AG04450 (cell line): ENCODE measurements at regions of chr4 and their contacts with region 1.

Region 1: DNA sequence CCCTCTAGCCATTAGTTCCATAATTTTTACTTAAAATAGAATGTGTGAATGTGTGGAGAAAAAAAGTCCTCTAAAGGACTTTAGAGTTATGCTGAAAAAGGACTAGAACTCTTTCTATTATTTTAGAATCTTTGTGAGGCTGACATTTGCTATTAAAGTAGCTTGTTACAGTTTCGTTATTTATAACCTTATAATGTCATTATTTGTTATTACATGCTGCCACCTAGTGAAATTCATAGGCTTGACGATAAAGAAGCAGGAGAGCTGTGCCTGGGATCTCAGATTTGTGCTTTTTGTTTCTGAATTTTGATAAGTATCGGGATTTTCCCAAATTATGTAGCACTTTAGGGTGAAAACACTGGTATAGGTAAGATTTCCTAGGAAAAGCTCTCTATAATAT is 38.5 kb upstream of the TAPT1 start:
- DNase-seq: no peak
- H3K4me3 ChIP-seq: no peak overlapping the region
- H3K27ac ChIP-seq: no peak overlapping the region
- H3K27me3 ChIP-seq: peaks cover 12% of the 10 kb centered on the region
- CTCF ChIP-seq: peak; percentile 68

Region 2: GRCh38 chr4:15805583-15806517 is 458.9 kb before region 1 on chr4:
- CTCF ChIA-PET with region 1: interaction called, 26 read pairs
- POLR2A ChIA-PET with region 1: no interaction called
- DNase-seq: peak; percentile 21
- H3K4me3 ChIP-seq: no peak overlapping the region
- H3K27ac ChIP-seq: no peak overlapping the region
- H3K27me3 ChIP-seq: peaks cover 12% of the 10 kb centered on the region
- CTCF ChIP-seq: peak; percentile 79

Region 3: DNA sequence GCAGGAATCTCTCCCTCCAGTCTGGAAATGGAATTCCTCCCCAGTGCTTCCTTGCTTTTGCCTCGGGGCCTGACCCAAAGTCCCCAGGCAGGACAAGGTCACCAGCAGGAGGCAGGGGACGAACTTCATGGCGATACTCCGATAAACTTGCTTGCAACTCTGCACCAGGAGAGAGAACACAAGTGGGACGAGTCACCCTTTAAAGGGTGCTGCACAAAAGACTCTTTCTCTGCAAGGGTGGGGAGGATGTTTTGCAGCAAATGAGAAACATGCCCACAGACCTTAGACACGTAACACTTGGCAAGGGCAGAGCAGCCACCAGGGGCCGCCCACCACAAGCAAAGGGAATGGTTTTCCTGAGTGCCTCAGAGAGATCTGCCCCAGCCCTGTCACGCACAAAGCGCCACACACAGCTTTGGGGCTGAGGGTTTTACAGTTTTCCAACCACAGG is 301.8 kb before region 1 on chr4 and contains the start of gene FGFBP2:
- CTCF ChIA-PET with region 1: interaction called, 18 read pairs
- POLR2A ChIA-PET with region 1: no interaction called
- DNase-seq: no peak
- H3K4me3 ChIP-seq: no peak within 1 kb of the TSS
- H3K27ac ChIP-seq: no peak within 1 kb of the TSS
- H3K27me3 ChIP-seq: peaks cover 15% of the 10 kb centered on the region
- CTCF ChIP-seq: peak; percentile 57
- polyA plus RNA-seq, gene FGFBP2: not detected in 2 replicates

Region 4: DNA sequence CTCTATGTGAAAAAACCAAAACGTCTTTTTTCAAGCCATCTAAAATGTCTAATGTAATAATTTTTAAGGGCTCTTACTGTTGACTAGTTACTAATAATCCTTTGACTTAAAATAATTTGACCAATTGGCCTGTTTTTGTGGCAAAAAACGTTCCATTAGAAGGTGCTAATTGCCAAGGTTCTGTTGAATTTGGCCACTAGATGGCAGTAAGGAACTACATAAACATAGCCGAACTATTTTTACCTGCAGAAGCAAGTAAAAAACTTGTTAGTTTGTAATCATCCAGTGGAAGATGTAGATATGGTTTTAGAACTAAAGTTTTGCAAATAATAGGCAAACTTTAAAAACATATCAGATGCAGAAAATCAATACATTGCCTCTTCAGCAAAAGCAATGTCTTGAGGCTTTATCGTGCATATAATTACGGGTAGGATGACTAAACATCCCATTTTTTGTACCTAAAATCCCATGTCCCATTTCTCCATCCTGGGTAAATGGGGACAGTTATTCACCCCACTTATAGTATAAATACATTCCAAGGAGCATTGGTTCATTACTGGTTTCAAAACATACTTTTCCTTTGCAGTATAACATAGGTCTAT is 238.5 kb before region 1 on chr4:
- CTCF ChIA-PET with region 1: interaction called, 98 read pairs
- POLR2A ChIA-PET with region 1: no interaction called
- DNase-seq: peak; percentile 21
- H3K4me3 ChIP-seq: no peak overlapping the region
- H3K27ac ChIP-seq: no peak overlapping the region
- H3K27me3 ChIP-seq: peaks cover 19% of the 10 kb centered on the region
- CTCF ChIP-seq: peak; percentile 82

Region 5: GRCh38 chr4:16116493-16116990 is 148.3 kb before region 1 on chr4:
- CTCF ChIA-PET with region 1: no interaction called
- POLR2A ChIA-PET with region 1: no interaction called
- DNase-seq: no peak
- H3K4me3 ChIP-seq: no peak overlapping the region
- H3K27ac ChIP-seq: no peak overlapping the region
- H3K27me3 ChIP-seq: peaks cover 10% of the 10 kb centered on the region
- CTCF ChIP-seq: no peak

Region 6: DNA sequence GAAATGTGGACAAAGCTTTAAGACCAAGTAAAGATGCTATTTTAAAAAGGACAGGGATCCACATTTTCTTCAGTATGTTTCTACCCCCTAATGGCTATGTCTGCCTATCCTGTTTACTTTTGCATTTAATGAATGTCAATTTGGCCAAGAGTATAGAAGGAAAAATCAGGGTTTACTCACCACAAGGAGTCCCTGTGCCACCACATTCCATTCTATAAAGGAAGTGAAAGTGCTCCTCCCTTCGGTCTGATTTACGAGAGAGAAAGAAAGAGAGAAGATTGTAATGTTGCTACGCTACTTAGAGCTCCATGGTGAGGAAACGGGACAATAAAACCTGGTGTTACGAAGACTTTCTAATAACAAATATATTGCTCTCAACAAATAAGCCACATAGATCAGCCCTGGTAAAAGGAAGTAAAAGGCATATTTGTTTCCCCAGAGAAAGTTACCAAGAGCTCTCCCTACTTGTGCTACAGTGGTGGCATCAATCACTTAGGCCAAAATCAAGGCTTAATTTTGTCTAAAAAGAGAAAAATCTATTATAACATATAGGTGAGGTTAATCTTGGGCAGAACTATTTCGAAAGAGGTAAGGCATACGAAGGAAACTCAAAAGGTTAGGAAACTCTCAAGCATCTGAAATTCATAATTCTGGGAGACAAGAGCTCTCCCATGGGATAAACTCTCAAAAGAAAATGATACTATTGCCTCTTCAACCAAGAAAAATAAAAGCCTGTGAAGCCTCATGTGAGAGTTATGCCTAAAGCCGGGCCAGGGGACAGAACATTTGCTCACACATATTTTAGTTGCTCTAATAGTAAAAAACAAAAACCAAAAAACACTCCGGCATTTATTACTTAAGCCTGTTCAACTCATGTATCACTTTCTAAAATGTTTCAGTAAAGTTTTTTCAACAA is 68.1 kb before region 1 on chr4:
- CTCF ChIA-PET with region 1: interaction called, 12 read pairs
- POLR2A ChIA-PET with region 1: no interaction called
- DNase-seq: no peak
- H3K4me3 ChIP-seq: no peak overlapping the region
- H3K27ac ChIP-seq: no peak overlapping the region
- H3K27me3 ChIP-seq: no peaks in the 10 kb centered on the region
- CTCF ChIP-seq: peak; percentile 47

Region 7: GRCh38 chr4:16253127-16253960 is 11.5 kb before region 1 on chr4:
- CTCF ChIA-PET with region 1: interaction called, 11 read pairs
- POLR2A ChIA-PET with region 1: no interaction called
- DNase-seq: peak; percentile 55
- H3K4me3 ChIP-seq: no peak overlapping the region
- H3K27ac ChIP-seq: no peak overlapping the region
- H3K27me3 ChIP-seq: no peaks in the 10 kb centered on the region
- CTCF ChIP-seq: no peak

Region 8: DNA sequence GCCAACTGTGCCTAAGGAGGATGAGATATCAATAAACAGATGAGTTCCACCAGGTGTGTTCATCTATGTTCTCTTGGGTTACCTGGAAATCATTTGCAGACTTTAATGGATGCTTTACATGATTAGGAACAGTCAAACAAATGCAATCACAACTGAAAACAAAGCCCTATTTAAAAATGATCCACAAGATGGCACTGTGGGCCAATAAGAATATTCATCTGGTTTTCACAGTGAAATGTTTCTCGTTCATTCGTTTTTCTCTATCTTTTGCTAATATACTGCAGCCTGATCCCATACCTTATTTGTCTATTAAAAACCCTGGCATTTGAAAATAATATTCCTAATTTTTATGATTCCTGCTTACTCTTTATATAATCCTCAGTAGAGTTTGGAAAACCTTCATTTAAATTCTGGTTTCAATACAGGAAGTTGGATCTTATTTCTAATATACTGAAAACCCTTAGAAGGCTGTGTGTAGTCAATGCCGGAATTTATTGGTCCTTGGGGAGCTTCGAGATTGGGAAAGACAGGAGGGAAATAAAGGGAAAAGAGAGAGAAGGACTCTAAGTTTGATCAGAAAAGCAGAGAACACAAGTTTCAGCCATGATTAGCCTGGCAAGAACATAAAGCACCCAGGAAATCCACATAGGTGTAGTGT is 25.2 kb after region 1 on chr4:
- CTCF ChIA-PET with region 1: interaction called, 11 read pairs
- POLR2A ChIA-PET with region 1: no interaction called
- DNase-seq: no peak
- H3K4me3 ChIP-seq: no peak overlapping the region; the same call in 1 of the 2 replicates
- H3K27ac ChIP-seq: no peak overlapping the region
- H3K27me3 ChIP-seq: peaks cover 9% of the 10 kb centered on the region
- CTCF ChIP-seq: peak; percentile 65

Region 9: DNA sequence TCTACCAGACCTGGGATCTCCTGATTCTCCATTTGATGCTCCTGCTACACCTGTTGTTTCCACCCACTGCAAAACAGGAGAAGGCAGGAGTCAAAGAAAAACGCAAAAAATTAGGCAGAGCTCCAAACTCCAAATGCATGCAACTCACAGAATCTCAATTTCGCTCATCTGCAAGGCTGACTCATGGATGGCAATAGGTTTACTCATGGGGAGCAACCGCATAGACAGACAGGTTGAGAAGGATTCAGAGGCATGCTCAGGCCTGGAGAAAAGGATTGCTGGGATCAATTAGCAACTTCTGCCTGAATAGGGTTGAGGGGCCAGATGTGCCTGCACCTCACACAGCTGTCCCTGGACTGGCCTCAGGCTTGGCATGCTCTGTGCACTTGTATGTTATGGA is 402.7 kb after region 1 on chr4:
- CTCF ChIA-PET with region 1: no interaction called
- POLR2A ChIA-PET with region 1: no interaction called
- DNase-seq: peak; percentile 81
- H3K4me3 ChIP-seq: no peak overlapping the region
- H3K27ac ChIP-seq: peak overlapping the region; percentile 47
- H3K27me3 ChIP-seq: no peaks in the 10 kb centered on the region
- CTCF ChIP-seq: no peak